ENCODE measurements at regions of chr7 and their contacts with region 1.

Region 1: GRCh38 chr7:2451171-2452073 is 24.8 kb downstream of the GRIFIN start:
- DNase-seq: peak; percentile 89
- ATAC-seq: peak; percentile 95
- H3K4me3 Mint-ChIP-seq: no peak overlapping the region
- H3K27ac Mint-ChIP-seq: peak overlapping the region; percentile 70; the same call in 1 of the 2 replicates
- H3K4me1 Mint-ChIP-seq: peaks cover 4% of the 10 kb centered on the region
- H3K27me3 Mint-ChIP-seq: no peaks in the 10 kb centered on the region
- CTCF ChIP-seq: peak; percentile 81

Region 2: DNA sequence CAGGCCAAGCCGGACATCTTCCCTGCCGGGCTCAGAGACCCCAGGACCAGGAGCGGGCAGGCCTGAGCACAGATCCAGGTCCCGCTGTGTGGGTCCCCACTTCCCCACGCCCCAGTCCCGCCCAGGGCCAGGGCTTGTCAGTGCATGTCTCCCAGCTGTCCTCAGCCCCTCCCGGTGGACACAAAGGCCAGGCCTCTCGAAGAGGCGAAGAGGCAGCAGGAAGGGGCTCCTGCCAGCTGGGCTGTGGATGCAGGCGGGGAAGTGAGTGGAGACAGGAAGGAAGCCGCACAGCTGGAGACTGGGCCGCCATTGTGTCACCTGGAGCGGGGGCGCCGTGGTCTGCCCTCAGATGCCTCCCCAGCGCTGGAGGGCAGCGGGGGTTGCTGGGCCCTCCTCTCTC is 20.0 kb after region 1 on chr7:
- CTCF ChIA-PET with region 1: interaction called, 288 read pairs
- POLR2A ChIA-PET with region 1: interaction called, 15 read pairs
- DNase-seq: peak; percentile 55
- ATAC-seq: peak; percentile 33
- H3K4me3 Mint-ChIP-seq: no peak overlapping the region
- H3K27ac Mint-ChIP-seq: no peak overlapping the region
- H3K4me1 Mint-ChIP-seq: peaks cover 31% of the 10 kb centered on the region
- H3K27me3 Mint-ChIP-seq: no peaks in the 10 kb centered on the region
- CTCF ChIP-seq: no peak

Region 3: GRCh38 chr7:2519119-2519930 is 67.9 kb after region 1 on chr7 and contains the start of gene LFNG:
- CTCF ChIA-PET with region 1: interaction called, 28 read pairs
- POLR2A ChIA-PET with region 1: no interaction called
- DNase-seq: peak; percentile 81
- ATAC-seq: peak; percentile 75
- H3K4me3 Mint-ChIP-seq: peak within 1 kb of the TSS; percentile 85
- H3K27ac Mint-ChIP-seq: no peak within 1 kb of the TSS
- H3K4me1 Mint-ChIP-seq: peaks cover 45% of the 10 kb centered on the region
- H3K27me3 Mint-ChIP-seq: peaks cover 24% of the 10 kb centered on the region
- CTCF ChIP-seq: no peak
- total RNA-seq, gene LFNG: 24.1 to 29.4 TPM (median 26.5 TPM) in 3 replicates

Region 4: DNA sequence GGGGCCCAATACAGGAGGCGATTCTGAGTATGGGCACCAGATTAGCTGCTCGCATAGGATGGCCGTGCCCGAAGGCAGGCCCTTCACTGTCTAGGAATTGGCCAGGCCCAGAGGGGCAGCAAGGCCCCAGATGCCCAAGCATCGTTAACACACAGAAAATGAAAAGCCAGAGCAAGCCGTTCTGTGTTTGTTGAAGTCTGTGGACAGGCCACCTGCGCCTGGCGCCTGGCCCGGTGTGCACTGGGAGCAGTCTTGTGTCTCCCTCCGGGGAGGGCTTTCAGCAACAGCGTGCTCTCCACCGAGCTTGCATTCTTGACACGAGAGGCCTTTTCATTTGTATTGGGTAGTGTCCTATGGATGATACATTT is 145.8 kb after region 1 on chr7:
- CTCF ChIA-PET with region 1: interaction called, 11 read pairs
- POLR2A ChIA-PET with region 1: no interaction called
- DNase-seq: no peak
- ATAC-seq: no peak
- H3K4me3 Mint-ChIP-seq: no peak overlapping the region
- H3K27ac Mint-ChIP-seq: no peak overlapping the region
- H3K4me1 Mint-ChIP-seq: no peaks in the 10 kb centered on the region; the same call in 1 of the 2 replicates
- H3K27me3 Mint-ChIP-seq: no peaks in the 10 kb centered on the region
- CTCF ChIP-seq: no peak

Region 5: DNA sequence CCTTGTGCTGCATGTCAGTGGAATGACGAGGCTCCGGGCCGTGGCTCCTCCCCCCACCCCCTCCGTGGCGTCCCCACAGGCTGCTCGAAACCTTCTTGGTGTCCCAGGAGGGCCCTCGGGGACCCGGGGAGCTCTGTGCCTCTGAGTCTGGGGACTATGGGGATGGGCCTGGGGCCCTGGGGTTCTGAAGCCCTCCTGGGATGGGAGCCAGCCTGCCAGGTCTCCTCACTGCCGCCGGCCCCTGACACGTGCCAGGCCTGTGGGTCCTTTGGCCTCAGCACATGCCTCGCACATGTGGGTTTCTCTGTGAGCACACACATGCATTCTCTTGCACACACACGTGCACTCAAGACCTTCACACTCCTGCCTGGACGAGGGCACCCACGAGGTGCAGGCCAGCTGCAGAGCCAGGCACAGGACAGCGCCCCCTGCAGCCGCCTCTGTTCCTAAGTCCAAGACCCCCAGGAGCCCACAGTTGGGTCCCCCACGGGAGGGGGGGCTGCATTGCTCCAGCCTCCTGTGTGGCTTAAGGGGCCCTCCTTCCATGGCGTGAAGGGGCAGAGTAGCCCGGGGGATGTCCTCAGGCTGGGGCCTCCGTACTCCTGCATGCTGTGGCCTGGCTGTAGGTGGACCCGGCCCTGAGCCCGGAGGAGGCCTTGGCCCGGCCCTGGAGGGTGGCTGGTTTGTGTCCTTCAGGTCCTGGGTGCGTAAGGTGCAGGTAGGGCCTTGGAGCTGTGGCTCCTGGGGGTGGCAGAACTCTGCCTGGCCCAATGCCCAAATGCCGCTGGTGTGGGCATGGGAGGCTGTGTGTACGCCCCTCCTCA is 209.4 kb after region 1 on chr7:
- CTCF ChIA-PET with region 1: interaction called, 10 read pairs
- POLR2A ChIA-PET with region 1: no interaction called
- DNase-seq: no peak
- ATAC-seq: no peak
- H3K4me3 Mint-ChIP-seq: no peak overlapping the region
- H3K27ac Mint-ChIP-seq: peak overlapping the region; percentile 83
- H3K4me1 Mint-ChIP-seq: peaks cover 6% of the 10 kb centered on the region; the same call in 1 of the 2 replicates
- H3K27me3 Mint-ChIP-seq: no peaks in the 10 kb centered on the region
- CTCF ChIP-seq: peak; percentile 58

Region 6: GRCh38 chr7:2688409-2689331 is 237.2 kb after region 1 on chr7:
- CTCF ChIA-PET with region 1: interaction called, 12 read pairs
- POLR2A ChIA-PET with region 1: no interaction called
- DNase-seq: peak; percentile 53
- ATAC-seq: peak; percentile 73
- H3K4me3 Mint-ChIP-seq: peak overlapping the region; percentile 61
- H3K27ac Mint-ChIP-seq: no peak overlapping the region
- H3K4me1 Mint-ChIP-seq: peaks cover 12% of the 10 kb centered on the region
- H3K27me3 Mint-ChIP-seq: peaks cover 32% of the 10 kb centered on the region
- CTCF ChIP-seq: no peak